AG04450 (cell line): ENCODE measurements at regions of chr1 and their contacts with region 1.

Region 1: DNA sequence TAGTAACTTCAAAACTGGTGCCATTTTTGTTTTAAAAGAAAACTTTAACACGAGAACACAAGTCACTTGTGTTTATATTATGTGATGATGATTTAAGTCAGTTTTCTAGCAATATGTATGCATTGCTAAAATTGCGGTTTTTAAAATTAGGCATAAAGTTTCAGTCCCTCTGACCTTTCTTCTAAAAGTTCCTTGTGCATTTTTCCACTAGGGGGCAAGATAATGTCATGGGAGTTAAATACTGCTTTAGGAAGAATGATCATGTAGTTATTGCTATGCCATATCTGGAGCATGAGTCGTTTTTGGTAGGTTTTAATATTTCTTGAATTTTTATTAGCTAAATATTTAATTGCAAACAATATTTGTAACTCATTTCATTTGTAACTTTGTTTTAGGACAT is 10.7 kb downstream of the CDC7 start:
- DNase-seq: no peak
- H3K4me3 ChIP-seq: no peak overlapping the region
- H3K27ac ChIP-seq: no peak overlapping the region
- H3K27me3 ChIP-seq: no peaks in the 10 kb centered on the region
- CTCF ChIP-seq: peak; percentile 81

Region 2: DNA sequence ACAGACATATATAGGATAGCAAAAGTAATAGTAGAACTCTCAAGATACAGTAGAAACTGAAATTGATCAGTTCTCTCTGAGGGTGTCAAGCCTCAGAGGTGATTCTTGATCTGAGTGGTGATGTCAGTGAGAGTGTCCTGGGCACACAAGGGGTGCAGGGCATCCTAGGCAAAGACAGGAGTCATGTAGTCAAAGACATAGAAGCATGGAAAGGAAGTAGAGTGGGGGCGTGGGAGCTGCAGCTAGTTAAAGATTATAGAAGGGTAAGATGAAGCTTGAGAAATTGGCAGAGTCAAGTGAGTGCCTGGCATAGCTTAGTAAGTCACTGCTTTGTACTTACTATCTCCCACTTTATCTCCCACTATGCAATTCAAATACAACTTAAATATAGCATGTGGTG is 12.1 kb after region 1 on chr1:
- CTCF ChIA-PET with region 1: interaction called, 34 read pairs
- POLR2A ChIA-PET with region 1: no interaction called
- DNase-seq: no peak
- H3K4me3 ChIP-seq: no peak overlapping the region
- H3K27ac ChIP-seq: no peak overlapping the region
- H3K27me3 ChIP-seq: no peaks in the 10 kb centered on the region
- CTCF ChIP-seq: no peak

Region 3: GRCh38 chr1:91582431-91582921 is 71.1 kb after region 1 on chr1:
- CTCF ChIA-PET with region 1: interaction called, 27 read pairs
- POLR2A ChIA-PET with region 1: no interaction called
- DNase-seq: peak; percentile 96
- H3K4me3 ChIP-seq: no peak overlapping the region
- H3K27ac ChIP-seq: peak overlapping the region; percentile 99
- H3K27me3 ChIP-seq: no peaks in the 10 kb centered on the region
- CTCF ChIP-seq: no peak

Region 4: GRCh38 chr1:91830242-91831131 is 319.1 kb after region 1 on chr1:
- CTCF ChIA-PET with region 1: interaction called, 30 read pairs
- POLR2A ChIA-PET with region 1: no interaction called
- DNase-seq: peak; percentile 76
- H3K4me3 ChIP-seq: no peak overlapping the region
- H3K27ac ChIP-seq: peak overlapping the region; percentile 39
- H3K27me3 ChIP-seq: no peaks in the 10 kb centered on the region
- CTCF ChIP-seq: peak; percentile 70

Region 5: DNA sequence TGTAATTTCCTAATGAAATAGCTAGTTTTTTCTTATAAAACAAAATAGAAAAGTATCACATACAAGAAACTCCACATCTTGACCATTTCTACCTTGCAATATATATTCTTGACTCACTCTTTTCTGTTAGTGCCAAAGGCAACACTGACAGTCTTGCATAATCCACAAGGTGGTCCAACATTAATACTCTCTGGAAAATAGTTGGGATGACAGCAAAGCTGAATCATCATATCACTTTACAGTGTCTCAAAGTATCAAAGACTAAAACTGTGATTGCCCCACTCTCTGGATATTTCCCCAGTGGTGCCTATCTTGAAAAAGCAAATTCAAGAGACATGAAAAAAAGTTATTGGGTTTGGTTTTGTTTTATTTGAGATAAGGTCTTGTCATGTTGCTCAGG is 389.2 kb after region 1 on chr1:
- CTCF ChIA-PET with region 1: interaction called, 22 read pairs
- POLR2A ChIA-PET with region 1: no interaction called
- DNase-seq: peak; percentile 85
- H3K4me3 ChIP-seq: no peak overlapping the region
- H3K27ac ChIP-seq: peak overlapping the region; percentile 55
- H3K27me3 ChIP-seq: no peaks in the 10 kb centered on the region
- CTCF ChIP-seq: no peak

Region 6: DNA sequence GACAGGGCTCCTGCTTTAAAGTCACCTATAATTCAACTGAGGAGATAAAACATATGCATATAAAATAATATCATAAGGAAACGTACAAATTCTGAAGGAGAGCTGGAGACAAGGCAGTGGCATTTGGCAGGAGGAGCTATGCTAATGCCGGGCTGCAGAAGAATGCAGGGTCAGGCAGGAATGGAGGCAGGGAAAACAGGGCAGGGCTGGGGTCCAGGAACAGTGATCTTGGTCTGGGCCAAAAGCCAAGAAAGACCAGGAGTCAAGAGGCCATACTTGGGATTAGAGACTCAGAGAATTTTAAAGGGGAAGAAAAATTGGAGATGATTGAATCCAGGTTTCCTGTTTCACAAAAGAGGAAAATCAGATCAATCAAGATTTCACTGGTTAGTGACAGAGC is 417.9 kb after region 1 on chr1:
- CTCF ChIA-PET with region 1: interaction called, 303 read pairs
- POLR2A ChIA-PET with region 1: no interaction called
- DNase-seq: no peak
- H3K4me3 ChIP-seq: no peak overlapping the region
- H3K27ac ChIP-seq: no peak overlapping the region
- H3K27me3 ChIP-seq: no peaks in the 10 kb centered on the region
- CTCF ChIP-seq: no peak

Region 7: GRCh38 chr1:92291372-92291999 is 780.1 kb after region 1 on chr1:
- CTCF ChIA-PET with region 1: interaction called, 45 read pairs
- POLR2A ChIA-PET with region 1: no interaction called
- DNase-seq: peak; percentile 44
- H3K4me3 ChIP-seq: no peak overlapping the region
- H3K27ac ChIP-seq: no peak overlapping the region
- H3K27me3 ChIP-seq: no peaks in the 10 kb centered on the region
- CTCF ChIP-seq: peak; percentile 84